Naive thymus-derived CD4-positive, alpha-beta T cell (primary cell): ENCODE measurements at regions of chr3 and their contacts with region 1.

Region 1: DNA sequence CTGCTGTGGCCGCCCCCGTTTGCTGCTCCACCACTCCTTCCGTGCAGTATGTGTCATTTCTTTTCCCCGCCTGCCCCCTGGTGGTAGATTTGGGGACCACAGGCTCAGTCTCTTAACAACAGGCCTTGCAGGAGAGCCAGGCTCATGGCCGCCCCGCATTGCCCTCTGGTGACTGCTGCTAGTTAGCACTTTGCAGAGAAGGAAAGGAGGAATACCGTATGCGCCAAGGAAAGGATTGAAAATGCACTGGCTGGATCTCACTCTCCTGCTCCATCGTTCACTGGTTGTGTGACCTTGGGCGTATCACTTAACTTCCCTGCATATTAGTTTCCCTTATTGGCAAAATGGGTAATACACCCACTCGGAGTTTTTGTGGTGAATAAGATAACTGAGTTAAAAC is 39.3 kb upstream of the PXYLP1 start:
- DNase-seq: peak; percentile 88 to 99 (median 95)
- ATAC-seq: peak; percentile 100
- H3K4me3 ChIP-seq: no peak overlapping the region
- H3K4me3 Mint-ChIP-seq: peak overlapping the region in 3 of 10 donors; percentile 5 to 14 (median 5)
- H3K27ac ChIP-seq: no peak overlapping the region
- H3K27ac Mint-ChIP-seq: peak overlapping the region in 6 of 9 donors; percentile 4 to 75 (median 16)
- H3K4me1 ChIP-seq: no peaks in the 10 kb centered on the region
- H3K4me1 Mint-ChIP-seq: peaks cover 0 to 15% (median 13%) of the 10 kb centered on the region in 7 donors
- H3K27me3 ChIP-seq: peaks cover 0 to 5% of the 10 kb centered on the region in 2 donors
- H3K27me3 Mint-ChIP-seq: peaks cover 0 to 23% (median 6%) of the 10 kb centered on the region in 5 donors

Region 2: GRCh38 chr3:139427283-139427993 is 1764.9 kb before region 1 on chr3:
- CTCF ChIA-PET with region 1: no interaction called
- POLR2A ChIA-PET with region 1: no interaction called
- intact Hi-C with region 1: loop called in 1 of 2 experiments (anchors 5 kb)
- DNase-seq: peak in 6 of 9 donors; percentile 20 to 59 (median 47)
- ATAC-seq: peak; percentile 68
- H3K4me3 ChIP-seq: no peak overlapping the region
- H3K4me3 Mint-ChIP-seq: no peak overlapping the region
- H3K27ac ChIP-seq: no peak overlapping the region
- H3K27ac Mint-ChIP-seq: no peak overlapping the region
- H3K4me1 ChIP-seq: no peaks in the 10 kb centered on the region
- H3K4me1 Mint-ChIP-seq: no peaks in the 10 kb centered on the region
- H3K27me3 ChIP-seq: no peaks in the 10 kb centered on the region
- H3K27me3 Mint-ChIP-seq: no peaks in the 10 kb centered on the region

Region 3: GRCh38 chr3:140898340-140899180 is 293.8 kb before region 1 on chr3:
- CTCF ChIA-PET with region 1: no interaction called
- POLR2A ChIA-PET with region 1: no interaction called
- intact Hi-C with region 1: loop called (anchors 1 kb)
- DNase-seq: peak in 7 of 9 donors; percentile 12 to 60 (median 38)
- ATAC-seq: peak; percentile 83
- H3K4me3 ChIP-seq: no peak overlapping the region
- H3K4me3 Mint-ChIP-seq: no peak overlapping the region
- H3K27ac ChIP-seq: no peak overlapping the region
- H3K27ac Mint-ChIP-seq: no peak overlapping the region
- H3K4me1 ChIP-seq: no peaks in the 10 kb centered on the region
- H3K4me1 Mint-ChIP-seq: peaks cover 0 to 2% (median 0%) of the 10 kb centered on the region in 7 donors
- H3K27me3 ChIP-seq: no peaks in the 10 kb centered on the region
- H3K27me3 Mint-ChIP-seq: peaks cover 22 to 35% (median 25%) of the 10 kb centered on the region in 5 donors

Region 4: DNA sequence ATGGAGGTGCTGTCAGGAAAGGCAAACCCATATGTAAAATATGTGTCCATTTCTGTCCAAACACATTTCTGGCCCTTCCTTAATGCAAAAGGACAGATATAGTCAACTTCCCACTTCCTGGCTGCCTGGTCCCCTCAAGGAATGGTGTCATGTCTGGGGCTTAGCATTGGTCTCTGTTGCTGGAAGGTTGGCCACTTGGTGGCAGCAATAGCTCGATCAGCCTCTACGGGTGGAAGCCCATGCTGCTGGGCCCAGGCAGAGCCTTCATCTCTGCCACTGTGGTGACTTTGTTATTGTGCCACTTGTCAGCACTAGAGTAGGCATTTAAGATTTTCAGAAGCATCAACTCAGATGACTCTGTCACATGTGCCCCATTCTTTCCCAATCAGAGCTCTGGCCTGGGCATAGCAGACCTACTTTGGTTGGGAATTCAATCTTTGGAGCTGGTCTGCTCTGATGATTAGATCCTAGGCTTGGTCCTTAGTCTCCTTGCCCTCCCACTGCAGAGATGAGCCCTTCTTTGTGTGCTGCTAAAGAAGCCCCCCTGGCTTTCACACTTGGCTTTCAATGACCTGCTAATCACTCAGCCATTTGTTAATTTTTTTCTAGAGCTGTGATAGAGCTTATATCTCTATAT is 192.2 kb before region 1 on chr3:
- CTCF ChIA-PET with region 1: interaction called, 24 read pairs
- POLR2A ChIA-PET with region 1: interaction called, 4 read pairs
- intact Hi-C with region 1: loop called (anchors 1 kb)
- DNase-seq: peak in 8 of 9 donors; percentile 11 to 48 (median 38)
- ATAC-seq: peak; percentile 85
- H3K4me3 ChIP-seq: no peak overlapping the region
- H3K4me3 Mint-ChIP-seq: no peak overlapping the region
- H3K27ac ChIP-seq: no peak overlapping the region
- H3K27ac Mint-ChIP-seq: no peak overlapping the region
- H3K4me1 ChIP-seq: no peaks in the 10 kb centered on the region
- H3K4me1 Mint-ChIP-seq: peaks cover 0 to 8% (median 0%) of the 10 kb centered on the region in 7 donors
- H3K27me3 ChIP-seq: no peaks in the 10 kb centered on the region
- H3K27me3 Mint-ChIP-seq: peaks cover 0 to 13% (median 6%) of the 10 kb centered on the region in 5 donors

Region 5: GRCh38 chr3:141094790-141095545 is 97.4 kb before region 1 on chr3:
- CTCF ChIA-PET with region 1: no interaction called
- POLR2A ChIA-PET with region 1: no interaction called
- intact Hi-C with region 1: no loop called
- DNase-seq: no peak
- ATAC-seq: no peak
- H3K4me3 ChIP-seq: no peak overlapping the region
- H3K4me3 Mint-ChIP-seq: no peak overlapping the region
- H3K27ac ChIP-seq: no peak overlapping the region
- H3K27ac Mint-ChIP-seq: no peak overlapping the region
- H3K4me1 ChIP-seq: no peaks in the 10 kb centered on the region
- H3K4me1 Mint-ChIP-seq: no peaks in the 10 kb centered on the region
- H3K27me3 ChIP-seq: no peaks in the 10 kb centered on the region
- H3K27me3 Mint-ChIP-seq: peaks cover 0 to 4% (median 0%) of the 10 kb centered on the region in 5 donors

Region 6: DNA sequence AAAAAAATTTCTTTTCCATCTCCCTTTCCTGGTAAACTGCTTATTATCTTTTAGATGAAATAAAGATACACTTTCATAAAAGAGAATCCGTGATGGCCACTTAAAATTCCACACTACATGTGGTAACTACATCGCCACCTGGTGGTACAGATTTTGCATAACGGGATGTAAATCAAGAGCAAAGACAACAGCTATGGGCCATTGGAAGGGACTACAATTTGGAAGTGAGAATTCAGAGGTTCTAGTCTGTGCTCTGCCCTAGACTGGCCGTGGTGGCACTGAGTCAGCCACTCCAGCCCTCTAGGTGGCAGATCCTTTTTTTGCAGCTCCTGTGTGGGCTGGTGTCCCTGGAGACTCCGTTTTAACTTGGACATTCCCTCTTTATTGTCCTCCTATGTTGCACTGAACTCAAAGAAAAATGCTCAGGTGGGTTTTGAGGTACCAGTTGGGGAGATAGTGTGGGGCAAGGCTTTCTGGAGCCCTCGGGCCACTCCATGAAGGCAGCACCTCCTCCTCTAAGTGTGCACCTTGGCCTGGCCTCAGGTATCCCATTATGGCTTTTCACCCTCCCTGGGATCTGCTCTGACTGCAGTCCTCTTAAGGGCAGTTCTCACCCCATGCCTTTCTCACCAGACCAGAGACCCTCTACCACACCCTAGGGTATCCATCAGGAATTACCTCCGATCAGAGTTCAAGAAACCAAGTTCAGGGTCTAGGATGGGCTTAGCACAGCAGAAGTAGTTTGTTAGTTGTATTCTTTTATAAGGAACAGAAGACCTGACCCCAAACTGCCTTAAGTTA is 86.3 kb before region 1 on chr3:
- CTCF ChIA-PET with region 1: no interaction called
- POLR2A ChIA-PET with region 1: no interaction called
- intact Hi-C with region 1: loop called (anchors 1 to 2 kb)
- DNase-seq: peak in 8 of 9 donors; percentile 21 to 61 (median 50)
- ATAC-seq: peak; percentile 72
- H3K4me3 ChIP-seq: no peak overlapping the region
- H3K4me3 Mint-ChIP-seq: no peak overlapping the region
- H3K27ac ChIP-seq: no peak overlapping the region
- H3K27ac Mint-ChIP-seq: no peak overlapping the region
- H3K4me1 ChIP-seq: no peaks in the 10 kb centered on the region
- H3K4me1 Mint-ChIP-seq: peaks cover 0 to 5% (median 0%) of the 10 kb centered on the region in 7 donors
- H3K27me3 ChIP-seq: no peaks in the 10 kb centered on the region
- H3K27me3 Mint-ChIP-seq: peaks cover 0 to 6% (median 0%) of the 10 kb centered on the region in 5 donors

Region 7: DNA sequence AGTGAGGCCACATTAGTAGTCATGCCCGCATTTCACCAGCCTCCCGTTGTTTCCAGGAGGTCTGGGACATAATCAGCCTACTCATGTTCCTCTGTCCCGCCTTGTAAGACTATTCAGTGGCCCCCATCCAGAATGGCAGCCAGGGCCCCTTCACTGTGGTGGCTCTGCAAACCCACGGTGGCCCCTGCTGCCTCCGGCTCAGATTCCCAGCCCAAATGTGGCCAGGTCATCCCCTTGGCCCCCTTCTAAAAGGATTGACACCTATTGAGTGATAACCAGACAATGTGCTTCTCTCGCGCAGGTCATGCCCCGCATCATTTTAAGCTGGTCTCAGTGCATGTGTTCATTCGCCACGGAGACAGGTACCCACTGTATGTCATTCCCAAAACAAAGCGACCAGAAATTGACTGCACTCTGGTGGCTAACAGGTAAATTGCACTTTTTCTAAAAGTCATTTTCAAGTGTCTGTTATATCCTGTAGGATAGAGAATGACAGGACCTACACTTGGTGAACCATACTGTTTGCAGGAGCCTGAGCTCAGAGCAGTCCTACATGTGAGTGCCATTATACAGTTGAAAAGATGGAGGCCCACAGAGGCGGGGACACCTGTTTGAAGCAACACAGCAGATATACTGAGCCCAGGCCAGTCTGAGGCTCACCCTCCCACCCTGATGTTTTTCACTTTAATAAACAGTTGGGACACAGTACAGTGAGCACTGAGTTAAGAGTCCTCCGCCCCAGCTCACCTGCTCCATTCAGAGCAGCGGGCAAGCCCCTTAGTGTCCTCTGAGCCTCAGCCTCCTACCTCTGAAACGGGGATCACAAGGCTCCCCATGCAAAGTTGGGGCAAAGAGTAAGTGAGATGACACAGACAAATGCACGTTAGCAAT is 87.0 kb after region 1 on chr3:
- CTCF ChIA-PET with region 1: no interaction called
- POLR2A ChIA-PET with region 1: no interaction called
- intact Hi-C with region 1: loop called in 1 of 2 experiments (anchors 1 kb)
- DNase-seq: peak in 7 of 9 donors; percentile 23 to 58 (median 46)
- ATAC-seq: peak; percentile 82
- H3K4me3 ChIP-seq: no peak overlapping the region
- H3K4me3 Mint-ChIP-seq: peak overlapping the region in 1 of 10 donors; percentile 17
- H3K27ac ChIP-seq: no peak overlapping the region
- H3K27ac Mint-ChIP-seq: peak overlapping the region in 6 of 9 donors; percentile 1 to 83 (median 44)
- H3K4me1 ChIP-seq: peaks cover 10 to 19% of the 10 kb centered on the region in 2 donors
- H3K4me1 Mint-ChIP-seq: peaks cover 14 to 36% (median 21%) of the 10 kb centered on the region in 7 donors
- H3K27me3 ChIP-seq: no peaks in the 10 kb centered on the region
- H3K27me3 Mint-ChIP-seq: no peaks in the 10 kb centered on the region

Region 8: GRCh38 chr3:142117056-142117851 is 924.9 kb after region 1 on chr3:
- CTCF ChIA-PET with region 1: no interaction called
- POLR2A ChIA-PET with region 1: no interaction called
- intact Hi-C with region 1: no loop called
- DNase-seq: no peak
- ATAC-seq: no peak
- H3K4me3 ChIP-seq: no peak overlapping the region
- H3K4me3 Mint-ChIP-seq: no peak overlapping the region
- H3K27ac ChIP-seq: no peak overlapping the region
- H3K27ac Mint-ChIP-seq: peak overlapping the region in 2 of 9 donors; percentile 16 to 51
- H3K4me1 ChIP-seq: no peaks in the 10 kb centered on the region
- H3K4me1 Mint-ChIP-seq: peaks cover 2 to 25% (median 15%) of the 10 kb centered on the region in 7 donors
- H3K27me3 ChIP-seq: no peaks in the 10 kb centered on the region
- H3K27me3 Mint-ChIP-seq: no peaks in the 10 kb centered on the region